ENCODE measurements at regions of chr2 and their contacts with region 1.

Region 1: DNA sequence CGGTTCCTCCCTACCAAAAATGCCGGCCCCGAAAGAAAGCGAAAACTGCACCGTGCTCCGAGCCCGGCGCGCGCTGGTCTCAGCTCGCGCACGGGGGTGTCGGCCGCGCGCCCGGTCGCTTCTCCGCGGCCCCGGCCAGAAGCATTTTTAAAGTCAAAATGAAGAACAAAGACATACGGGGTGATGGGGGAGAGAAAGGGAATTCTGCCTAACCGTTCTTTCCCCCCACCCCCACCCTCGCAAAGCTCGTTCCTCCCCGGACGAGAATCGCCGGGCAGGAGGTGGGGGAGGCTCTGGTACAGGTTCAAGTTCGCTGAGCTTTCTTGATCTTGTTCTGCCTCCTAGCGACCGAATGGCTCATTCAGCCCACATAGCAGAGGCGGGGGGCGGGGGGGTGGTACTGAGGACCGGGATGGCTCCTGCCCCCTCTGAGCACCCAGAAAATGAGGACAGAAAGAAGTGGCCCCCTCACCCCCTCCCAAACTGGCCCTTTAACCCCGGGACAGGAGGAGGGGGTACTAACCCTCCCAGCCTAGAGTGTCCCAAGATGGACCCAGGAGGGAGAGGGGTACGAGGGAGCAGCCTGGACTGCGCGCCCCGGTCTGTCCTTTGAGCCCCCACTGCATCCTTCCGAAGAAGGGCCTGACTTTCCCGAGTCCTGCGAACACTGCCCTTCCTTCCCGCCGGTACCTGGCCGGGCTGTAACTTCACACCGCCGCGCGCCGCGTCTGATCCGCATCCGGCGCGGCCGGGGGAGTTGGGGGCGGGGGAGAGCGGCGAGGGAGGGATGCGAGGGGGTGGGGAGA is 3.1 kb downstream of the BCL11A start:
- DNase-seq: peak; percentile 75
- H3K4me3 Mint-ChIP-seq: peak overlapping the region; percentile 83
- H3K27ac Mint-ChIP-seq: no peak overlapping the region
- H3K4me1 Mint-ChIP-seq: peaks cover 31% of the 10 kb centered on the region
- H3K27me3 Mint-ChIP-seq: peaks cover 66% of the 10 kb centered on the region

Region 2: GRCh38 chr2:58571181-58571852 is 1979.1 kb before region 1 on chr2:
- CTCF ChIA-PET with region 1: no interaction called
- intact Hi-C with region 1: loop called (anchors 2 kb)
- DNase-seq: peak; percentile 28
- H3K4me3 Mint-ChIP-seq: no peak overlapping the region
- H3K27ac Mint-ChIP-seq: no peak overlapping the region
- H3K4me1 Mint-ChIP-seq: no peaks in the 10 kb centered on the region
- H3K27me3 Mint-ChIP-seq: no peaks in the 10 kb centered on the region

Region 3: DNA sequence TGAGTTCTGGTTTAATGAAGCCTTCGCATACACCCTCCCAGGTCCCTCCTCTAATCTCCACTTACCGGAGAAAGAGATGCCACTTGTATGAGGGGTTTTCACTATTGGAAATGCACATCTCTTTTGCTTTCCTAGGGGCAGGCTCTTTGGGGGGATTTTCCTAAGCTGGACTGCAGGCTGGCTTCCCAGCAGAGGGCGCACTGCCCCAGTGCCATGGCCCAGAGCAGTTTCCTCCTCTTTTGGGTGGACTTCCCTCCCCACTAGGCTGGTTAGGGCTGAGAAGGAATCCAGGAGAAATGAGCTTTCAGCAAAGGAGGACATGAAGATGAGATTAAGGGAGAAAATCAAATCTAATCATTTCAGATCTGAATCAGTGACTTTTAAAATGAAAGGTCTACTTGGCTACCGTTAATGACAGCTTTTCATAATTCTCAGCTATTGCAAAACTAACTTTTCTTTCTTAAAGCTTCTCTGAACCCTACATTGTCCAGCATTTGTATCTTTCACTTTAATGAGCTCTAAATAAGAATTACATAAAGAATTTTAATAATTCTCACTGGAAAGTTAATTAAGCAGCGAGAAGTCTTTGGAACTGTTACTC is 1525.1 kb before region 1 on chr2:
- CTCF ChIA-PET with region 1: no interaction called
- intact Hi-C with region 1: loop called (anchors 10 kb)
- DNase-seq: peak; percentile 27
- H3K4me3 Mint-ChIP-seq: no peak overlapping the region
- H3K27ac Mint-ChIP-seq: no peak overlapping the region
- H3K4me1 Mint-ChIP-seq: no peaks in the 10 kb centered on the region
- H3K27me3 Mint-ChIP-seq: peaks cover 2% of the 10 kb centered on the region

Region 4: GRCh38 chr2:59307196-59307595 is 1243.2 kb before region 1 on chr2:
- CTCF ChIA-PET with region 1: interaction called, 5 read pairs
- intact Hi-C with region 1: loop called (anchors 2 kb)
- DNase-seq: no peak
- H3K4me3 Mint-ChIP-seq: no peak overlapping the region
- H3K27ac Mint-ChIP-seq: no peak overlapping the region
- H3K4me1 Mint-ChIP-seq: no peaks in the 10 kb centered on the region
- H3K27me3 Mint-ChIP-seq: peaks cover 13% of the 10 kb centered on the region

Region 5: GRCh38 chr2:60152226-60152833 is 398.1 kb before region 1 on chr2:
- CTCF ChIA-PET with region 1: no interaction called
- intact Hi-C with region 1: loop called (anchors 5 kb)
- DNase-seq: no peak
- H3K4me3 Mint-ChIP-seq: no peak overlapping the region
- H3K27ac Mint-ChIP-seq: no peak overlapping the region
- H3K4me1 Mint-ChIP-seq: no peaks in the 10 kb centered on the region
- H3K27me3 Mint-ChIP-seq: no peaks in the 10 kb centered on the region

Region 6: DNA sequence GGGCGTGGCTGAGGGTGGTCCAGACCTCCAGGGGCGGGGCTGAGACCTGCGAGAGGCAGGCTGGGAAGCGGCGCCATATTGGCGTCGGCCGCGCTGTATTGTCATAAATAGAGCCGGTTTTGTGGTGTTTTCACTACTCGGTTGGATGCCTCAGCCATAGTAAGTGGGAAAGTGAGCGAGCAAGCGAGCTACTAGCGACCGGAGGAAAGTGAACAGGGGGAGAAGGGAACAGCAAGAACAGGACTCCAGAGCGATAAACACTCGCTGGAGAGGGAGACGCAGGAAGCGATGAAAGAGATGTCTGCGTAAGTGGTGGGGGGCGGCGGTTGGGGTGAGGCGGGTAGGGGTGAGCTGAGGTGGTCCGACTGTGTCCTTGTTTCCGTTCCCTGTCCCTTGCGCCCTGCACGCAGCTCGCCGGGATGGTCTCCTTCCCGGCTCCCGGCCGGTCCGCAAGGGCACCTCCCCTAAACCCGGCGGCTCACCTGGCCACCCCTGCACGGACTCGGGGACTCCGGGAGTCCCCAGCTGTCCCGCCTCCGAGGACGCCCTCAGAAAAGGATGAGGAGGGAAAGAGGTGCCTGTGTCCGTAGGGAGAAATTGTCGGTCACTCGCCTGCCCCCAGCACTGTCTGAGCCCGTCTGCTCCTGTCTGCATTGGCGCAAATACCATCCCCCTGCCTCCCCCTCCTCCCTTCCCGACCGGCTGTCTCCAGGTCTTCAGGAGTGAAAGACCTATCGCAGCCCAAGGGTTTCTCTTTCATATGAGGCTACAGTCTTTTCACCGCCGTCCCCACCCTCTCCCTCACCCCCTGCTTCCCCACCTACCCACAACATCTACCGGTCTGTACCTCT is 206.0 kb after region 1 on chr2 and contains the start of gene PAPOLG:
- CTCF ChIA-PET with region 1: no interaction called
- intact Hi-C with region 1: loop called (anchors 5 kb)
- DNase-seq: peak; percentile 99
- H3K4me3 Mint-ChIP-seq: peak within 1 kb of the TSS; percentile 99
- H3K27ac Mint-ChIP-seq: peak within 1 kb of the TSS; percentile 97
- H3K4me1 Mint-ChIP-seq: peaks cover 40% of the 10 kb centered on the region
- H3K27me3 Mint-ChIP-seq: no peaks in the 10 kb centered on the region
- total RNA-seq, gene PAPOLG: 14.1 to 16.1 TPM

Region 7: GRCh38 chr2:60961501-60961900 is 411.1 kb after region 1 on chr2:
- CTCF ChIA-PET with region 1: no interaction called
- intact Hi-C with region 1: no loop called
- DNase-seq: no peak
- H3K4me3 Mint-ChIP-seq: no peak overlapping the region
- H3K27ac Mint-ChIP-seq: no peak overlapping the region
- H3K4me1 Mint-ChIP-seq: peaks cover 32% of the 10 kb centered on the region
- H3K27me3 Mint-ChIP-seq: no peaks in the 10 kb centered on the region

Region 8: GRCh38 chr2:61016808-61017555 is 466.6 kb after region 1 on chr2:
- CTCF ChIA-PET with region 1: no interaction called
- intact Hi-C with region 1: loop called (anchors 10 kb)
- DNase-seq: peak; percentile 82
- H3K4me3 Mint-ChIP-seq: peak overlapping the region; percentile 98
- H3K27ac Mint-ChIP-seq: peak overlapping the region; percentile 95
- H3K4me1 Mint-ChIP-seq: peaks cover 43% of the 10 kb centered on the region
- H3K27me3 Mint-ChIP-seq: no peaks in the 10 kb centered on the region

Region 9: DNA sequence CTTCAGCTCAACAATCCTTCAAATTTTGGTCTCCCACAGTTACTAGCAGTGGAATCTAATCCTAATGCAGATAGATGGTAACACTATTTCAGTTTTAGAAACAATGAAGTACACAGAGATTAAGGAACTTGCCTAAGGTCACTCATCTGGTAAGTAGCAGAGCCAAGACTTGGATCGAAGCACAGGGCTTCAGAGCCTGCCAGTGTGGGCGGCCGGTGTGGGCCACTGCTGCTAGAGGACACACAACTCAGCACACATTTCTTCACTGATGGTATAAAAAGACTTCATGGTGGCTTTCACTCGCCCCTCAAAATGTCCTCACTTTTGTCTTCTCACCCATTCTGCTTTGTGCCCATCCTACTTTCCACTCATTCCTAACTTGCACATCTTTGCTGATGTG is 622.7 kb after region 1 on chr2:
- CTCF ChIA-PET with region 1: no interaction called
- intact Hi-C with region 1: no loop called
- DNase-seq: no peak
- H3K4me3 Mint-ChIP-seq: no peak overlapping the region
- H3K27ac Mint-ChIP-seq: no peak overlapping the region
- H3K4me1 Mint-ChIP-seq: peaks cover 9% of the 10 kb centered on the region
- H3K27me3 Mint-ChIP-seq: no peaks in the 10 kb centered on the region

Measured in activated naive CD4-positive, alpha-beta T cell treated with anti-CD3 and anti-CD28 coated beads for 36 hours (primary cell).